Left cardiac atrium (tissue), 4 donors: ENCODE measurements at regions of chr11 and their contacts with region 1.

Region 1: DNA sequence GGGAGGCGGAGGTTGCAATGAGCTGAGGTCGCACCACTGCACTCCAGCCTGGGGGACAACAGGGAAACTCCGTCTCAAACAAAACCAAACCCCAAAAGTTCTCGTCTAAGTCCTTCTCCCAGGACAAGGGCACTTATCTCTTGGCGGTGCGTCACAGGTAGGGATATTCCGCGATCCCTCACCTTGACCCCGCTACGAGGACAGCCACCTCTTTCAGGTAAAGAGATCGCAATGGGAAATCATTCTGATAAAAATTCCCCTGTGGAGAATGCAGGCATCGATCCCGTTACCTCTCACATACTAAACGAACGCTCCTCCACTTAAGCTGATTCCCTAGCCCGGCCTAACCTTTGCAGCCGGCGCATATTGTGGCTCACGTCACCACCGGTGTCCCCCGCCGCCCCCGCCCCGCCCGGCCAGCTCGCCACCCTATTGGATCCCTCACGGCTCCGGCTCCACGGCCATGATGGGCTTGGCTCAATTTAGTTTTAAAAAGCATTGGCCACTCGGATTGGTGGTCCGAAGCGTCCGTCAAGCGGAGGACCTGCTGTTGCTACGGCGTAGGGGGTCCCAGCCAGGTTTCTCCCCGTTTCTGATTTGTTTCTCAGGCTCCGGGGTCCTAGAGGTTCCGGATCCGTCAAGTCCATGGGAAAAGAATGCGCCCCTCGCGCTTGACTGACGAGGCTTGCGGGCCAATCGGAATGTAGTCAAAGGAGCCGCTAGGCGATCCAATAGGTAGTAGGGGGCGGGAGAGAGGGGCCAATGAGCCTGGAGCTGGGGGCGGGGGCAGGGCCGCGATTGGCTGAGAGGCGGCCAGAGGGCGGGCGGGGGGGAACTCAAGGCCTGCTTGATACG is 439 bp upstream of the PPP6R3 start:
- DNase-seq: peak; percentile 98
- ATAC-seq: peak; percentile 95 to 96

Region 2: GRCh38 chr11:68424981-68425865 is 34.9 kb before region 1 on chr11:
- intact Hi-C with region 1: no loop called
- DNase-seq: no peak
- ATAC-seq: peak in 1 of 2 donors; percentile 16

Region 3: DNA sequence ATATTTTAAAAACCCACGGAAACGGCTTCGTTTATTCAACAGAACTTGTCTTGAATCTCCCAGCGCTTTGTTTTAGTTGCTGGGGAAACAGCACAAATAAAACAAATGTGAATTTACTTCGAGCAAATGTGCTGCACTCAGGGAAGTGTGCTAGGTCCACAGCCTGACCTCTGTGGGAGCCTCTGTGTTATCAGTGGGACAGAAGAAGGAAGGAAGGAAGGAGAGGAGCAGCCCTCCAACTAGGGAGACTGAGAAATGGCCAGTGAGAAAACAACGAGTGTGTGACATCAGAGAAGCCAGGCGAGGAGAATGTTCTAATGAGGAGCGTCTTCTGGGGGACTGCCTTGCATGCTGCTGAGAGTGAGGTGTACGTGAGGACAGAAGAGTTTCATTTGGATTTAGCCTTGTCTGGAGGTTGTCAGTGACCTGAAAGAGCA is 43.2 kb after region 1 on chr11:
- intact Hi-C with region 1: loop called in 1 of 2 experiments (anchors 5 kb)
- DNase-seq: no peak
- ATAC-seq: peak in 1 of 2 donors; percentile 59

Region 4: DNA sequence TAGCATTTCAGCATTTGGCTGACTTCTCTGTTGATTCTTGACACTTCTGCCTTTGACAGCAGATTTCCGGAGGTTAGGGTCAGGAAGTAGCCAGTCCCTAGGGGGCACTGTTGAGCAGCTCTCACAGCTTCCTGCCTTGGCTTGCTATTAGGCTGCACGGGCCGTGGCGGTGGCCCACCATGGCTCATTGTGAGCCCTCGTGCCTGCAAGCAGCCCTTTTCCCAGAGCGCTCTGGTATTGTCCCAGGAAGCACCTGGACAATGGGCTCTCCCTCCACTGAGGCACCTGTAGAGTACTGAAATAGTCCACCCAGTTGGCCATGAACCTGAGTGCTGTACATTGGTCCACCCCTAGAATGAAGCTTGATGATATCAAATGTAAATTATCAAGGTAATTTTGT is 124.0 kb after region 1 on chr11:
- intact Hi-C with region 1: loop called (anchors 10 kb)
- DNase-seq: peak; percentile 54
- ATAC-seq: peak in 1 of 2 donors; percentile 19